Natural killer cell (primary cell): ENCODE measurements at regions of chr1 and their contacts with region 1.

Region 1: DNA sequence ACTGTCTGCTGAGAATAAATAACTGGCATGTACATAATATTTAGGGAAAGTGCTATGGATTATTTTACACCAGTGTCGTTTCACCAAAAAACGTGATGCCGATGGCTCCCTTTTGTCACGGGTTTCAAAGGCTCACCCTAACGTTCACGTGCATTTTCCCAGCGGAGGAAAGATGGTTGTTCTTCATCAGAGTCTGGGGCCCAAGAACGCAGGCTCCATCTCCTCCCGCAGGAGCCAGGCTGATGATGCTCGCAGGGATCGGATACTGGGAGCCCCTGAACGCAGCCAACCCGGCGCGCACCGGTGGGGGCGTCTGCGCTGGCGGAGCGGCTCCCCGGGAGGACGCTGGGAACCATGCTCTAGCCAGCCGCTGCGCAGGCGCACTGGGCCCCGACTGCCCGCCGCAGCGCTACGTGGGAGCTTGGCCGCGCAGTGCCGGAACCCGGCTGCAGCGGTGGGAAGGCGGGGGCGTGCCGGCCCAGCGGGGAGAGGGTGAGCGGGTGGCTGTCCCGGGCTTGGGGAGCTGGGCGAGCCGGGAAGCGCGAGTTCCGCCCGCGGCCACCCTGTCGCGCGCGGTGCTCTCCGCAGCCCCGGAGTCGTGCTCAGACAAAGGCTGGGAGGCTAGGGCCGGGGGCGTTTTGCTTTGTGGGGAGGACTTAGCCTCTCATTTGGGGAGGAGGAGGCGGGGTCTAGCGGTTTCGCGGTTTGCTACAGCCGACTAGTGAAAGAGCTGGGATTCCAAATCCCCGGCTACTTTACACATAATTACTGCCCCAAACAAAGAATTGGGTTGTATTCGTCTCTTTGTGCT is at the start of gene ZFP69B:
- DNase-seq: peak; percentile 85 to 93
- ATAC-seq: peak; percentile 77 to 90 (median 89)
- H3K4me3 ChIP-seq: peak within 1 kb of the TSS; percentile 59
- H3K4me3 Mint-ChIP-seq: peak within 1 kb of the TSS; percentile 90
- H3K27ac ChIP-seq: peak within 1 kb of the TSS; percentile 75
- H3K27ac Mint-ChIP-seq: peak within 1 kb of the TSS; percentile 89 to 91
- H3K4me1 ChIP-seq: peaks cover 12% of the 10 kb centered on the region
- H3K4me1 Mint-ChIP-seq: peaks cover 20 to 24% of the 10 kb centered on the region in 2 donors
- H3K27me3 ChIP-seq: no peaks in the 10 kb centered on the region
- H3K27me3 Mint-ChIP-seq: no peaks in the 10 kb centered on the region
- CTCF ChIP-seq: no peak
- total RNA-seq, gene ZFP69B: 2.2 to 2.4 (median 2.3) TPM

Region 2: GRCh38 chr1:40414331-40414730 is 35.6 kb before region 1 on chr1:
- intact Hi-C with region 1: loop called (anchors 1 kb)
- DNase-seq: peak in 1 of 2 donors; percentile 54
- ATAC-seq: peak; percentile 85 to 90 (median 86)
- H3K4me3 ChIP-seq: no peak overlapping the region
- H3K4me3 Mint-ChIP-seq: peak overlapping the region; percentile 49
- H3K27ac ChIP-seq: peak overlapping the region; percentile 76
- H3K27ac Mint-ChIP-seq: peak overlapping the region; percentile 89 to 96
- H3K4me1 ChIP-seq: peaks cover 35% of the 10 kb centered on the region
- H3K4me1 Mint-ChIP-seq: peaks cover 36 to 37% of the 10 kb centered on the region in 2 donors
- H3K27me3 ChIP-seq: no peaks in the 10 kb centered on the region
- H3K27me3 Mint-ChIP-seq: no peaks in the 10 kb centered on the region
- CTCF ChIP-seq: no peak

Region 3: DNA sequence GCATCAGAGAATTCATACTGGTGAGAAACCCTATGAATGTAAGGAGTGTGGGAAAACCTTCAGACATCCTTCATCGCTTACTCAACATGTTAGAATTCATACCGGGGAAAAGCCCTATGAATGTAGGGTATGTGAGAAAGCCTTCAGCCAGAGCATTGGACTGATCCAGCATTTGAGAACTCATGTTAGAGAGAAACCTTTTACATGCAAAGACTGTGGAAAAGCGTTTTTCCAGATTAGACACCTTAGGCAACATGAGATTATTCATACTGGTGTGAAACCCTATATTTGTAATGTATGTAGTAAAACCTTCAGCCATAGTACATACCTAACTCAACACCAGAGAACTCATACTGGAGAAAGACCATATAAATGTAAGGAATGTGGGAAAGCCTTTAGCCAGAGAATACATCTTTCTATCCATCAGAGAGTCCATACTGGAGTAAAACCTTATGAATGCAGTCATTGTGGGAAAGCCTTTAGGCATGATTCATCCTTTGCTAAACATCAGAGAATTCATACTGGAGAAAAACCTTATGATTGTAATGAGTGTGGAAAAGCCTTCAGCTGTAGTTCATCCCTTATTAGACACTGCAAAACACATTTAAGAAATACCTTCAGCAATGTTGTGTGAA is 13.2 kb after region 1 on chr1:
- intact Hi-C with region 1: no loop called
- DNase-seq: peak in 1 of 2 donors; percentile 9
- ATAC-seq: no peak
- H3K4me3 ChIP-seq: no peak overlapping the region
- H3K4me3 Mint-ChIP-seq: no peak overlapping the region
- H3K27ac ChIP-seq: no peak overlapping the region
- H3K27ac Mint-ChIP-seq: no peak overlapping the region
- H3K4me1 ChIP-seq: no peaks in the 10 kb centered on the region
- H3K4me1 Mint-ChIP-seq: no peaks in the 10 kb centered on the region
- H3K27me3 ChIP-seq: no peaks in the 10 kb centered on the region
- H3K27me3 Mint-ChIP-seq: no peaks in the 10 kb centered on the region
- CTCF ChIP-seq: no peak

Region 4: GRCh38 chr1:40476924-40477677 is 27.2 kb after region 1 on chr1 and contains the start of gene ZFP69:
- intact Hi-C with region 1: loop called (anchors 2 kb)
- DNase-seq: peak; percentile 72 to 84
- ATAC-seq: peak; percentile 90 to 96 (median 95)
- H3K4me3 ChIP-seq: peak within 1 kb of the TSS; percentile 84
- H3K4me3 Mint-ChIP-seq: peak within 1 kb of the TSS; percentile 97
- H3K27ac ChIP-seq: peak within 1 kb of the TSS; percentile 58
- H3K27ac Mint-ChIP-seq: peak within 1 kb of the TSS; percentile 73 to 82
- H3K4me1 ChIP-seq: peaks cover 11% of the 10 kb centered on the region
- H3K4me1 Mint-ChIP-seq: peaks cover 24 to 28% of the 10 kb centered on the region in 2 donors
- H3K27me3 ChIP-seq: no peaks in the 10 kb centered on the region
- H3K27me3 Mint-ChIP-seq: no peaks in the 10 kb centered on the region
- CTCF ChIP-seq: no peak
- total RNA-seq, gene ZFP69: 4.6 to 5.4 (median 4.6) TPM

Region 5: GRCh38 chr1:40508375-40509341 is 58.8 kb after region 1 on chr1 and contains the start of gene EXO5:
- intact Hi-C with region 1: loop called (anchors 10 kb)
- DNase-seq: peak; percentile 78 to 85
- ATAC-seq: peak; percentile 93 to 96 (median 96)
- H3K4me3 ChIP-seq: peak within 1 kb of the TSS; percentile 89
- H3K4me3 Mint-ChIP-seq: peak within 1 kb of the TSS; percentile 90
- H3K27ac ChIP-seq: peak within 1 kb of the TSS; percentile 73
- H3K27ac Mint-ChIP-seq: peak within 1 kb of the TSS; percentile 89 to 94
- H3K4me1 ChIP-seq: peaks cover 12% of the 10 kb centered on the region
- H3K4me1 Mint-ChIP-seq: peaks cover 19 to 21% of the 10 kb centered on the region in 2 donors
- H3K27me3 ChIP-seq: no peaks in the 10 kb centered on the region
- H3K27me3 Mint-ChIP-seq: no peaks in the 10 kb centered on the region
- CTCF ChIP-seq: no peak
- total RNA-seq, gene EXO5: 9.6 to 17.0 (median 10.1) TPM